K562 (cell line): ENCODE measurements at regions of chr14 and their contacts with region 1.

Region 1: DNA sequence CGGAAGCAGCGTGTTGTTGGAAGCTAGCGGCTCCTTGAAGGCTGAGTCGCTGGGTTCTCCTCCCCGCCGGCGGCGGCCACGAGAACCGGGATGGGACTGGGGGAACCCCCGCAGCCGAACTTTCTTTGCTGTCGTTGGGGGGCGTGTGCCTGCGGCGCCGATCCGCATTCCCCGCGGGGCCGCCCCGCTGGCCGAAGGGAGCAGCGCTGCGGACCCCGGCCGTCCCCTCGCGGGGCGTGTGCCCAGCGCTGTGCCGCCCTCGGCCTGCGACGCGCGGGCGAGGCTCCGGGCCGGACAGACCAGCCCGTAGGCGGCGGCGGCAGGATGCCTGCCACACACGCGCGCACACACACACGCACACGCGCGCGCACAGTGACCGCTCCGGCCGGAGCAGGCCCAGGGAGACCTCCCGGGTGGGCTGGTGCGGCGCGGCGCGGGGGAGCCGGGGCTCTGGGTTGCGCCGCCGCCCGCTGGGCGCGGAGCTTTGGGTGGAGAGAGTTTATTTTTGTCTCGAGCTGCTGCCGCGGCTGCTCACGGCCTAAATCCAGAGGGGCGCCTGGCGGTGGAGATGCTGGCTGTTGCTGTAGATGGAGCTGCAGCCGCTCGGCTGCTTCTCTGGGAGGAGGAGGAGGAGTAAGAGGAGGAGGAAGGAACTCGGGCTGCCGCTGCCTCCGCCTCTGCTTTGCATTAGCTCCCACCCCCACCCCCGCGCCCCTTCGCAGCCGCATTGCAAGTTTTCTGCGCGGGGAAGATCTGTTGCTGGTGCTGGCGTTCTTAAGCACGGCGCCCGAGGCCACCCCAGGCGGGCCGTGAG is at the start of gene SAMD4A:
- DNase-seq: peak; percentile 37 to 86 (median 58)
- ATAC-seq: peak; percentile 66
- H3K4me3 ChIP-seq: peak within 1 kb of the TSS; percentile 69
- H3K27ac ChIP-seq: peak within 1 kb of the TSS; percentile 81
- H3K4me1 ChIP-seq: peaks cover 12 to 39% of the 10 kb centered on the region in 2 experiments; a peak in 4 of 5 replicates
- H3K27me3 ChIP-seq: no peaks in the 10 kb centered on the region
- CTCF ChIP-seq: peak in 2 of 3 experiments; percentile 46 to 53; a peak in 4 of 6 replicates
- EP300 ChIP-seq: no peak
- POLR2A ChIP-seq: peak; percentile 54; the same call in 1 of the 2 replicates
- RAD21 ChIP-seq: peak; percentile 14 to 27; a peak in 3 of 4 replicates
- polyA plus RNA-seq, gene SAMD4A: 0.66 to 1.9 TPM

Region 2: DNA sequence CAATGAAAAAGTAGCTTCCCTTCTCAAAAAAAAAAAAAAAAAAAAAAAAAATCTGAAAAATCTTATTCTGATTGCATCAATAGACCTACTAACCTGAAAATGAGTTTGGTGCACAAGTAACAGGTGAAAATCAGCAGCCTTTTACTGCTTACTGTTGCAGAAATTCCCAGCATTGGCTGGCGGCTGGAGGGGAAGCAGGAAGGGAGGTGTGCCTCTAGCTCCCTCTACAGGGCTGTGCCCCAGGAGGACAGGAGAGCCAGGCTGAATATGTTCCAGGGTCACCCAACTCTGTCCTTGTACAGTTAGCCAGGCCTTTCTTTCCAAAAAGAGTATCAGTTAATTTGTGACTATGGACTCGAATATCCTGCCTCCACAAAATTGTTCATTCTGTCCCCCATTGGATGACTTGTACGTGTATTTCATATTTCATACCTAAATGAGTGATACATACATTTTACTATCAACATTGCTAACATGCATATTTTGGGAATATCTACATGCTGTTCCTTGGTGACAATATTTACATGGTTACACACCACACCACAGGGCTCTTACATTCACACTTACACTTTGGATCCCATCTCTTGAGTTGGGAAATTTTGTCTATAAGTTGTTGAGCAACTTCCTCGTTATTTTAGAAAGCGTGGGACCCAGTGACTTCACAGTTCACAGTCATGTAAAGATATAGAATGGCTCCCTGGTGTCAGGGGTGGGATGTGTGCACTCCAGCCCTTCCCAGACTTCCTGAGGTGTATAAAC is 125.1 kb after region 1 on chr14:
- CTCF ChIA-PET with region 1: interaction called, 8 read pairs
- POLR2A ChIA-PET with region 1: interaction called, 3 read pairs
- in situ Hi-C with region 1: no loop called
- intact Hi-C with region 1: loop called (anchors 1 kb)
- DNase-seq: peak; percentile 43 to 74 (median 59)
- ATAC-seq: peak; percentile 94
- H3K4me3 ChIP-seq: no peak overlapping the region
- H3K27ac ChIP-seq: no peak overlapping the region; the same call in 2 of the 3 replicates
- H3K4me1 ChIP-seq: peaks cover 0 to 6% of the 10 kb centered on the region in 2 experiments; a peak in 2 of 5 replicates
- H3K27me3 ChIP-seq: no peaks in the 10 kb centered on the region
- CTCF ChIP-seq: peak; percentile 79 to 83 (median 83)
- EP300 ChIP-seq: no peak
- POLR2A ChIP-seq: no peak
- RAD21 ChIP-seq: peak; percentile 57 to 69

Region 3: DNA sequence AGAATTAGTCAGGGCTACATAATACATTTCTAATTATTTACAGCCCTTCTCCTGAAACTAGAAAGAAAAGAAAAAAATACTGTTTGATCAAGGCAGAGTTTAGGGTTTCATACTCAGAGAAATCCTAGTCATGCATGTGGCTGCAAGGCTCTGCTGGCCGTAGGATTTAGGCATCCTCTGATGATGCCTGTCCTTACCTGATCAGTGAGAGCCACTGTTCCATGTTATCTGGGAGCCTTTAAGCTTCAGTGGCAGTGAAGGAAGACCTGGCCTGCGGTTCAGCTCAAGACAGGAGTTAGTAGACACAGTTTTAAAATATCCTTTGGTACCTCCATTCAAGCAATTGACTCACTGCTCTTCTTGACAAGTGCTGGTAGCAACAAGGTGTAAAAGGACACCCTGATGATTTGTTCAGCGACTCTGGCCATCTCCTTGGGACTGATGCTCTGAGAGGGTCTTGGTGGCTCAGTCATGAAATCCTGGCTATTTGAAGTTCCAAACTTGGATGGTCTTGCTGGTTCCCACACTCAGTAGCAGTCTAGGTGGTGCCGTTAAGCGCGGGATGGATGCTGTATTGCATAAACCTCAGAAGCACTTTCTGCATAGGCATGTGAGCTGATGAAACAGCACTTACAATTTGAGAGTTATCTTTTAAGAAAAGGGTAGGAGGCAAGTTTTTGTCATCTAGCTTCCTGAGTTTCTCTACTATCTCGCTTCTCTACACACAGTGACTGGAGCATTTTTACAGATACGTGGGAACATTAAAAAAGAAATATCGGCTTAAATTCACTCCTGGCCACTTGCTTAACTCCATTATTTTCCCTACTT is 162.3 kb after region 1 on chr14:
- CTCF ChIA-PET with region 1: no interaction called
- POLR2A ChIA-PET with region 1: interaction called, 4 read pairs
- in situ Hi-C with region 1: no loop called
- intact Hi-C with region 1: loop called (anchors 2 kb)
- DNase-seq: peak in 1 of 4 experiments; percentile 70
- ATAC-seq: peak; percentile 76
- H3K4me3 ChIP-seq: peak overlapping the region; percentile 50
- H3K27ac ChIP-seq: peak overlapping the region; percentile 89
- H3K4me1 ChIP-seq: peaks cover 0 to 27% of the 10 kb centered on the region in 2 experiments; a peak in 4 of 5 replicates
- H3K27me3 ChIP-seq: no peaks in the 10 kb centered on the region
- CTCF ChIP-seq: no peak
- EP300 ChIP-seq: peak; percentile 80
- POLR2A ChIP-seq: peak; percentile 53; the same call in 1 of the 2 replicates
- RAD21 ChIP-seq: no peak

Region 4: DNA sequence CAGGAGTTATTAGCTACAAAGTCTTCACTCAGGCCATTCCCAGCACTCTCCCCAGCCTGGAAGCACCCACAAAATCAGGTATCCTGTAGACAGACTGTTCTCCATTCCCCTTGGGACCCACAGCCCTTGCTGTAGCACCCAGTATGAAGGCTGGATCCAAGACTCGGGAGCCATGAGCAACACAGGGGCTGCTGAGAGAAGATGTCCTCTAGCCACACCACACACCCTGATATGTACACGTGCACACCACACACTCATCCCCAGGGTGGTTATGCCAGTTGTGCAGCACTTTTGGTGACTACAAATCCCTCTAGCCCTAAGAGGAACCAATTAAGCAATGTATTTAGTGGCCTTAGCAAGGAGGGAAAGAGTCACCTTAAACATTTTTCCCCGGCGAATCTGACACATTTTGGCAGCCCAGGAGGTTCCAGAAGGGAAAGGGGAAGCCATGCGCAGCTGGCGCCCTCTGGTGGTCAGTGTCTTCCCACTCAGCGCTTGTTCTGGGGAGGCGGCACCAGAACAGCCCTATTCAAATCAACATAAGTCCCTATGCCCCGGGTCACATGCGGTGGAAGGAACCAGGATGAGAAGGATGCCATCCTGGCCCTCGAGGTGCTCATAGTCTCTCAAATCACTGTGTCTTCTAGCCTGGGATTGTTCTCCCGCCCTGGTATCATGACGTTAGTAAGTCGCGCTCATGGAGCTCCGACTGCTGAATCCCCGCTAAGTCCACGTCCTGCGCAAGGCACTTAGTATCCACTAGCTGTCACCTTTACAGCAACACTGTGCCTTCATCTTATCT is 239.1 kb after region 1 on chr14:
- CTCF ChIA-PET with region 1: interaction called, 8 read pairs
- POLR2A ChIA-PET with region 1: no interaction called
- in situ Hi-C with region 1: no loop called
- intact Hi-C with region 1: loop called (anchors 2 kb)
- DNase-seq: peak; percentile 69 to 86 (median 71)
- ATAC-seq: peak; percentile 96
- H3K4me3 ChIP-seq: no peak overlapping the region
- H3K27ac ChIP-seq: no peak overlapping the region
- H3K4me1 ChIP-seq: peaks cover 0 to 3% of the 10 kb centered on the region in 2 experiments; a peak in 3 of 5 replicates
- H3K27me3 ChIP-seq: peaks cover 0 to 8% of the 10 kb centered on the region in 2 experiments; a peak in 2 of 5 replicates
- CTCF ChIP-seq: peak; percentile 83 to 89 (median 85)
- EP300 ChIP-seq: no peak
- POLR2A ChIP-seq: no peak
- RAD21 ChIP-seq: peak; percentile 47 to 86